ENCODE measurements at regions of chr7 and their contacts with region 1.

Region 1: DNA sequence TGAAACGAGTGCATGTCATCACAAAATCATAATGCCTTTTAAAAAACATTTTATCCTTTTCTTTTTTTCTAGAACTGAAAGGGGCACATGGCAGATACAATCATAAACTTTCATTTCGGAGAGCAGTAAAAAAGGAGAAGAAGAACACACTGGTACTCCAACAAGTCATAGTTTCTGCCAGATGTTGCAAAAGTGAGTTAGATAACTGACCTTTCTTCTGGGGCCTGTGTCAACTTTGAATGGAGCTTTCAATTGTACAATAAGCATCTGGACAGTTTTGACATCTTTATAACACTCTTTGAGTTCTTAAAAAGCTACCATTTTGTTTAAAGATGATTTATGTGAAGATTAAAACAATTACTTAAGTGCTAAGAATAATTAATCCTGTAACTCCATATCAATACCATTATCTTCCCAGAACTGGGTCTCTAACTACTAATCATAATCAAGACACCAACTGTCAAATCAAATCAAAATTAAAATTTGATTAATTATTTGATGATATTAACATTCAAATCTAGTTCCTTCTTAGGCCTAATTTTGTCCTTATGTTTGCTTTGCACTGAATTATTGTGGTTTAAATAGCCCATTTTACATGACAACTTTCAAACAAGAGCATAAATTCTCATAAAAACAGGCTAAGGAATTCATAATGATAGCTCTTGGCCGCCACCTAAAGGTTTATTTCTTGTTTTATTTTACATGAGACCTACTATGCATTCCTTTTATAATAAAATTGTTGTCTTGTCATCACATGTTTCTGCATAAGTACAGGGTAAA is 19.5 kb upstream of the ITGB8 start:
- H3K4me3 Mint-ChIP-seq: no peak overlapping the region
- H3K27ac Mint-ChIP-seq: no peak overlapping the region
- H3K4me1 Mint-ChIP-seq: peaks cover 11% of the 10 kb centered on the region
- H3K27me3 Mint-ChIP-seq: peaks cover 5% of the 10 kb centered on the region

Region 2: GRCh38 chr7:19754521-19755116 is 556.5 kb before region 1 on chr7:
- intact Hi-C with region 1: loop called (anchors 5 kb)
- H3K4me3 Mint-ChIP-seq: no peak overlapping the region
- H3K27ac Mint-ChIP-seq: no peak overlapping the region
- H3K4me1 Mint-ChIP-seq: no peaks in the 10 kb centered on the region
- H3K27me3 Mint-ChIP-seq: no peaks in the 10 kb centered on the region

Region 3: DNA sequence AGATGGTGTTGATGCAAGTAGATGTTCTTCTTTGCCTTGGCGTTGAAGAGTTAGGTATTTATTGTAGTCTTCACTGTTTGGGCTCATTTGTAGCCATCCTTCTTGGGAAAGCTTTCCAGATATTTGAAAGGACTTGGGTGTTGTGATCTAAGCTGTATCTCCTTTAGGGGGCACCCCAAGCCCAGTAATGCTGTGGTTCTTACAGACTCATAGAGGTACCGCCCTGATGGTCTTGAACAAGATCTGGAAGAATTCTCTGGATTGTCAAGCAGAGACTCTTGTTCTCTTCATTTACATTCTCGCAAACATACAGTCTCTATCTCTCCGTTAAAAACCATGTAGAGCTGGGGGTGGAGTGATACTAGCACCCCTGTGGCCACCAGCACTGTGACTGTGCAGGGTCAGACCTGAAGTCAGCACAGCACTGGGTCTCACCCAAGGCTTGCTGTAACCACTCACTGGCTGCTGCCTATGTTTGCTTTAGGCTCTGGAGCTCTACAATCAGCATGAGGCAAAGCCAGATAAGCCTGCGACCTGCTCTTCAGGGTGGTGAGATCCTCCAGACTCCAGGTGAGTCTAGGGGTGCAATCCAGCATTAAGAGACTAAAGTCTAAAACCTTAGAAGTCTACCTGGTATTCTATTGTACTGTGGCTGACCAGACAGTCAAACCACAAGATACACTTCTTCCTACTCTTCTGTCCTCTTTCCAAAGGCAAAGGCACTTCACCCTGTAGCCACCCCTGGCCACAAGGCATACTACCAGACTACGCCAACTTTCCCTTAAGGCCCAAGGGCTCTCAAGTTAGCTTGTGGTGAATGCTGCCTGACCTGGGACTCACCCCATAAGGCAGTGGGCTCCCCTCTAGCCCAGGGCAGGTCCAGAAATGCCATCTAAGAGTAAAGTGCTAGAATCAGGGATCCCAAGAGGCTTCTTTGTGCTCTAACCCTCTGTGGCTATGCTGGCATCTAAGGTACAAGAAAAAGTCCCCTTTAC is 328.0 kb before region 1 on chr7:
- intact Hi-C with region 1: loop called (anchors 2 kb)
- H3K4me3 Mint-ChIP-seq: no peak overlapping the region
- H3K27ac Mint-ChIP-seq: no peak overlapping the region
- H3K4me1 Mint-ChIP-seq: no peaks in the 10 kb centered on the region
- H3K27me3 Mint-ChIP-seq: no peaks in the 10 kb centered on the region

Region 4: GRCh38 chr7:20030915-20031362 is 280.2 kb before region 1 on chr7:
- intact Hi-C with region 1: no loop called
- H3K4me3 Mint-ChIP-seq: no peak overlapping the region
- H3K27ac Mint-ChIP-seq: no peak overlapping the region
- H3K4me1 Mint-ChIP-seq: peaks cover 21% of the 10 kb centered on the region
- H3K27me3 Mint-ChIP-seq: no peaks in the 10 kb centered on the region

Region 5: DNA sequence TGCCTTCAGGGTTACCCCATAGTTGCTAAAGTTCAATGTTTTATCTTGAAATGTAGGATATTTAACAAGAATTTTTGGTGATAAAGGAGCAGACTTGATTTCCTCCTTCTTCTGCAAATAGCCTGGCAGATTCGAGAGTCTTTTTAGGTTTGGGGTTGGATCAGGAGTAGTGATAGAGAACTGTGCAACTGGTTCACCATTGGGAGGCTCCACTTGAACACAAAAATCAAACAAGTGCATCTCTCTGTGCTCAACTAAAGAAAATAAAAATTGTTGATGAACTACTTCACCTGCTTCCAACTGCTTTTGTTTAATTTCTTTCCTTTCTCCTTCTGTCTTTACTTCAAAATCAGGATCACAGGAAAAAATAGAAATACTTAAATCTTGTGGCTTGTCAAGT is 152.5 kb before region 1 on chr7:
- intact Hi-C with region 1: loop called (anchors 2 kb)
- H3K4me3 Mint-ChIP-seq: no peak overlapping the region
- H3K27ac Mint-ChIP-seq: no peak overlapping the region
- H3K4me1 Mint-ChIP-seq: peaks cover 14% of the 10 kb centered on the region
- H3K27me3 Mint-ChIP-seq: no peaks in the 10 kb centered on the region

Measured in dendritic cell treated with granulocyte-macrophage colony-stimulating factor and Interleukin-4, amounts not matched to agents 40 ng/mL and 50 ng/mL, for 4 days (primary cell).